Activated T-helper 2 cell treated with anti-CD3 and anti-CD28 coated beads, Interferon-gamma antibody, Interleukin-2, Interleukin-4, amounts not matched to agents 10 μg/mL and 5 μg/mL and 100 μg/mL, durations not matched to agents 14 hours and 24 hours and 36 hours (primary cell): ENCODE measurements at regions of chr3 and their contacts with region 1.

Region 1: GRCh38 chr3:4421121-4421520 is 45.9 kb downstream of the SUMF1 start:
- DNase-seq: no peak
- H3K4me3 Mint-ChIP-seq: no peak overlapping the region
- H3K27ac Mint-ChIP-seq: peak overlapping the region; percentile 69
- H3K4me1 Mint-ChIP-seq: peaks cover 43% of the 10 kb centered on the region
- H3K27me3 Mint-ChIP-seq: no peaks in the 10 kb centered on the region

Region 2: DNA sequence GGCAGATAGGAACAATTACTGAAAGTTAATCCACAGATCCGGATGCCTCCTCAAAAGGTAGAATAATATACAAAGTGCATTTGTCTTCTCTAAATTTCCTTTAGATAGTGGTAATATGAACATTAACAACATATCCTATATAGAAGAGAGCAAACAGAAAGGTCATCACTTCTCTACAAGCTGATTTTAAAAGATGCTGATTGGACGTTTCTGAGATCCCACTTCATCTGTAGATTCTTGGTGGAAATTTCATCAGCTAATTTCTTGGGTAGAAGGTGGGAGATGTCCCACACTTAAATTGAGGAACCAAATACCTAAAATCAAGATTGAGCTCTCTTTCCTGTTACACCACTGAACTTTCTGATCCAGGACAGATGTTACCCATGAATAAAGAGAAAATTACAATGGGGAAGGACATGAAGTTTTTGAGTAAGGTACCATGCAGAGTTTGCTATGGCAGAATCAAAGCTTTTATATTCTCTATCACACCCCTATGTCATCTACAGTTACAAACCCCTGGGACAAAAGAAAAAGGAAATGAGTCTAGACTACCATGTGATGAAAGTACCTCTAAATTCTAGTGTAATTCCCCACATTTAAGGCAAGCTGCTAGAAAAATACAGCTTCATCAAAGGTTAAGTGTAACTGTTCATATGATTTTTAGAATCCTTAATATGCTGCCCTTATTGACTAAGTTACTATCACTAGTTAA is 307.2 kb before region 1 on chr3:
- intact Hi-C with region 1: no loop called
- DNase-seq: no peak
- H3K4me3 Mint-ChIP-seq: no peak overlapping the region
- H3K27ac Mint-ChIP-seq: no peak overlapping the region
- H3K4me1 Mint-ChIP-seq: no peaks in the 10 kb centered on the region
- H3K27me3 Mint-ChIP-seq: no peaks in the 10 kb centered on the region

Region 3: GRCh38 chr3:4314688-4315087 is 106.4 kb before region 1 on chr3:
- intact Hi-C with region 1: no loop called
- DNase-seq: no peak
- H3K4me3 Mint-ChIP-seq: no peak overlapping the region
- H3K27ac Mint-ChIP-seq: no peak overlapping the region
- H3K4me1 Mint-ChIP-seq: peaks cover 4% of the 10 kb centered on the region
- H3K27me3 Mint-ChIP-seq: no peaks in the 10 kb centered on the region

Region 4: DNA sequence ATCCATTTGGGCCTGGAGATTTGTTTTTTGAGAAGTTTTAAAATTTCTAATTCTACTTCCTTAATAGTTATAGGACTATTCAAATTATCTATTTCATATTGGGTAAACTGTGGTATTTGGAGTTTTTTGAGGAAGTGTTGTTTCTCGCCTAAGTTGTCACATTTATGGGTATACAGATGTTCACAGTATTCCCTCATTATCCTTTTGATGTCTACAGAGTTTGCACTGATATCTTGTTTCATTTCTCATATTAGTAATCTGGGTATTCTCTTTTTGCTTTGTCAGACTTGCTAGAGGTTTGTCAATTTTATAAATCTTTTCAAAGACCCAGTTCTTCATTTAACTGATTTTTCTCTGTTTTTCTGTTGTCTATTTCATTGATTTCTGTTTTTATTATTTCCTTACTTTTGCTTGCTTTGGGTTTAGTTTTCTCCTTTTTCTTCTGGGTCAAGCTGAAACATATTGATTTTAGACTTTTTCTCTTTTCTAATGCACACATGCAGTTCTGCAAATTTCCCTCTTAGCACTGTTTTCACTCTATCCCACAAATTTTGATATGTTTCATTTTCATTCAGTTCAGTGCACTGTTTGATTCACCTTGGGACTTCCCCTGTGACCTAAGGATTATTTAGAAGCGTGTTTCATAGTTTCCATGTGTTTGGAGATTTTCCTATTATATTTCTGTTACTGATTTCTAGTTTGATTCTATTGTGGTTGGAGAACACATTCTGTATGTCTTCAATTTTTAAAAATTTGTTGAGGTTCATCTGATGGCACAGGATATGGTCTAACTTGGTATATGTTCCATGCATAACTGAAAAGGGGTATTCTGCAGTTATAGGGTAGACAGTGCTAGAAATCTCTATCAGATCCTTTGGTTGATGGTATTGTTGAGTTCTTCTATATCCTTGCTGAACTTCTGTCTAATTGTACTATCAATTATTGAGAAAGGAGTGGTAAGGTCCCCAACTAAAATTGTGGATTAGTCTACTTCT is 33.6 kb before region 1 on chr3:
- intact Hi-C with region 1: loop called (anchors 1 kb)
- DNase-seq: no peak
- H3K4me3 Mint-ChIP-seq: no peak overlapping the region
- H3K27ac Mint-ChIP-seq: peak overlapping the region; percentile 87
- H3K4me1 Mint-ChIP-seq: peaks cover 45% of the 10 kb centered on the region
- H3K27me3 Mint-ChIP-seq: no peaks in the 10 kb centered on the region

Region 5: GRCh38 chr3:4401441-4401840 is 19.7 kb before region 1 on chr3:
- intact Hi-C with region 1: loop called (anchors 1 kb)
- DNase-seq: no peak
- H3K4me3 Mint-ChIP-seq: peak overlapping the region; percentile 37
- H3K27ac Mint-ChIP-seq: peak overlapping the region; percentile 77
- H3K4me1 Mint-ChIP-seq: peaks cover 45% of the 10 kb centered on the region
- H3K27me3 Mint-ChIP-seq: no peaks in the 10 kb centered on the region

Region 6: GRCh38 chr3:4466741-4467521 is 45.8 kb after region 1 on chr3 and contains the start of gene SUMF1:
- intact Hi-C with region 1: loop called (anchors 2 kb)
- DNase-seq: peak; percentile 67
- H3K4me3 Mint-ChIP-seq: peak within 1 kb of the TSS; percentile 95
- H3K27ac Mint-ChIP-seq: peak within 1 kb of the TSS; percentile 91
- H3K4me1 Mint-ChIP-seq: peaks cover 16% of the 10 kb centered on the region
- H3K27me3 Mint-ChIP-seq: peaks cover 3% of the 10 kb centered on the region
- total RNA-seq, gene SUMF1: 6.9 and 7.7 TPM in 2 replicates